GM10248 (cell line): ENCODE measurements at regions of chr2 and their contacts with region 1.

Region 1: GRCh38 chr2:176140513-176141317 is 10.6 kb upstream of the HOXD4 start:
- DNase-seq: peak; percentile 92
- CTCF ChIP-seq: peak; percentile 95

Region 2: DNA sequence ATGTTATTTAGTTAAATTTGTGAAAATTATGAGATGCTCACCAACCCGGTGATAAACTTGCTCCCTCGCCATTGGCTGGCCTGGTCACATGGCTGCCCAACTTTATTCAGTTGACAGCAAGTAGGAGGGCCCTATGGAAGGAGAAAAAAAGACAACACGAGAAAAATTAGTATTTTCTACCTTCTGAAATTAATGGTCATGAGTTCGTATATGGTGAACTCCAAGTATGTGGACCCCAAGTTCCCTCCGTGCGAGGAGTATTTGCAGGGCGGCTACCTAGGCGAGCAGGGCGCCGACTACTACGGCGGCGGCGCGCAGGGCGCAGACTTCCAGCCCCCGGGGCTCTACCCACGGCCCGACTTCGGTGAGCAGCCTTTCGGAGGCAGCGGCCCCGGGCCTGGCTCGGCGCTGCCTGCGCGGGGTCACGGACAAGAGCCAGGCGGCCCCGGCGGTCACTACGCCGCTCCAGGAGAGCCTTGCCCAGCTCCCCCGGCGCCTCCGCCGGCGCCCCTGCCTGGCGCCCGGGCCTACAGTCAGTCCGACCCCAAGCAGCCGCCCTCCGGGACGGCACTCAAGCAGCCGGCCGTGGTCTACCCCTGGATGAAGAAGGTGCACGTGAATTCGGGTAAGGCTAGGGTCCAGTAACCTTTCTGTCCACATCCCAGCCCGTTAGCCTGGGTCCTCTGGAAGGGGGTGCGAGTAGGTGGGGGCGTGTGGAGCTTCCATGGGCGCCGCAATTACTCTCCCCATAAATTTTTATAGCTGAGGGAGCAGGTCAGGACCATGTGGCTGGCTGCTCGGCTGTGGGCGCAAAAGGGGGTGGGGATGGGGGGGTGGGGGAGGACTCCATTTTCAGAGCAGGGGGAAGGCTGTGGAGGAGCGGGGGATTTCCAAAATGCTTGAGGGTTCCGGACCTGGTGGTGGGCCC is 11.0 kb after region 1 on chr2 and contains the start of gene HOXD4:
- CTCF ChIA-PET with region 1: interaction called, 18 read pairs
- POLR2A ChIA-PET with region 1: no interaction called
- DNase-seq: no peak
- CTCF ChIP-seq: no peak

Region 3: DNA sequence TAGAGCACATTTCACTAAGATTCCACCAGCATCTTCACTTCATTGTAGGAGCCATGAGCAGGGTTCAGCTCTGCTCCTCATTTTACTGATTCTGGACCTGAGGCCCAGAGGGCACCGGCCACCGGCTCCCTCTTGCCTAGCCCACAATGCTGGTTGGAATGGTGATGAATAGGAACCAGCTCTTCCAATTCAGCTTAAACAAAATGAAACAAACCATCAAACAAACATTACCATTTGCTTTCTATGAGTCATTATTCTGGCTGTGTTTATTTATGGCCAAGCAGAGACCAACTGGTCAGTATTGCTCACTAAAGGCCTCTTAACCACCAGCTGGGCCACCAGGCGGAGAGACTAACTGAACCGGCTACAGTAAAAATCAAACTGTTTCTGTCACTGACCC is 305.2 kb after region 1 on chr2:
- CTCF ChIA-PET with region 1: interaction called, 124 read pairs
- POLR2A ChIA-PET with region 1: no interaction called
- DNase-seq: no peak
- CTCF ChIP-seq: no peak

Region 4: GRCh38 chr2:176554101-176555048 is 413.7 kb after region 1 on chr2:
- CTCF ChIA-PET with region 1: interaction called, 31 read pairs
- POLR2A ChIA-PET with region 1: no interaction called
- DNase-seq: peak; percentile 68
- CTCF ChIP-seq: peak; percentile 56

Region 5: DNA sequence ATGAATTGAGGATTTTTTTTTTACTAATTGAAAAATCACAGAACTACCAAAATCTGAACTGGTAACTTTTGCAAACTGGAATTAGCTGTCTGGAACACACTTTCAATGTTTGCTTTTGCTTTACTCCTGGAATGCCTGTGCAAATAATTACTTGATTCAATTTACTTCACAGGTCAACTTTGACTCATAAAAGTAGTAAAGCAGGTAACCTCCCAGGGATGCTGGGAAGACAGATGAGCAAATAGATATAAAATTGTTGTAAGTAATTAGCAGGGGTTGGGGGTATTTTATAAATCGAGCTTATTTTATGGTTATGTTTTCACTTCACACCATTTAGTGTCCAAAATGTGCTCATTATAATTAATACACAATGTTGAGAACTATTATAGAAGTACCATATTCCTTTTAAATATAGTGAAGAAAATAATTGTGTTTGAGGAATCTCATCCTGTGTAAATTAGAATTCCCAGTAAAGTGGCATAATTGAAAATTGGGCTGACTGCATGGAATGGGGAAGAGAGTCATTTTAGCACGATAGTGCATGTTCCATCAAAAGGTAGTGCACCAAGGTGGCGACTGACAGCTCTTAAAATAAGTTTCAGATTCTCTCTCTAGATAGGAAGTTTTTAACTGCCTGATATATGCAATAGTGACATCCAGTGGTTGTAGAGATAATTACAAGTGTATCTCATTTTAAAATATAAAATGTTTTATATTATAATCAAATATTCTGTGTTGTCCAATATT is 673.8 kb after region 1 on chr2:
- CTCF ChIA-PET with region 1: interaction called, 17 read pairs
- POLR2A ChIA-PET with region 1: no interaction called
- DNase-seq: peak; percentile 49
- CTCF ChIP-seq: peak; percentile 42